Spleen (tissue), 13 donors: ENCODE measurements at regions of chr3 and their contacts with region 1.

Region 1: GRCh38 chr3:136075218-136075808 is 109.8 kb downstream of the PPP2R3A start:
- DNase-seq: no peak
- H3K4me3 ChIP-seq: no peak overlapping the region
- H3K27ac ChIP-seq: peak overlapping the region in 1 of 8 donors; percentile 11
- H3K4me1 ChIP-seq: peaks cover 0 to 17% (median 1%) of the 10 kb centered on the region in 6 donors
- H3K27me3 ChIP-seq: no peaks in the 10 kb centered on the region
- CTCF ChIP-seq: peak; percentile 74 to 96 (median 91)
- POLR2A ChIP-seq: no peak

Region 2: GRCh38 chr3:135944831-135945592 is 130.3 kb before region 1 on chr3:
- intact Hi-C with region 1: no loop called
- DNase-seq: no peak
- H3K4me3 ChIP-seq: no peak overlapping the region
- H3K27ac ChIP-seq: no peak overlapping the region
- H3K4me1 ChIP-seq: no peaks in the 10 kb centered on the region
- H3K27me3 ChIP-seq: peaks cover 0 to 13% (median 0%) of the 10 kb centered on the region in 7 donors
- CTCF ChIP-seq: no peak
- POLR2A ChIP-seq: no peak

Region 3: GRCh38 chr3:136250226-136250902 is 175.1 kb after region 1 on chr3 and contains the start of gene PCCB:
- intact Hi-C with region 1: loop called (anchors 5 kb)
- DNase-seq: peak; percentile 99
- H3K4me3 ChIP-seq: peak within 1 kb of the TSS; percentile 60 to 95 (median 72)
- H3K27ac ChIP-seq: peak within 1 kb of the TSS; percentile 87 to 95 (median 90)
- H3K4me1 ChIP-seq: peaks cover 9 to 23% (median 20%) of the 10 kb centered on the region in 6 donors
- H3K27me3 ChIP-seq: no peaks in the 10 kb centered on the region
- CTCF ChIP-seq: peak; percentile 70 to 96 (median 89)
- POLR2A ChIP-seq: no peak
- total RNA-seq, gene PCCB: 17.3 to 24.7 (median 21.0) TPM

Region 4: DNA sequence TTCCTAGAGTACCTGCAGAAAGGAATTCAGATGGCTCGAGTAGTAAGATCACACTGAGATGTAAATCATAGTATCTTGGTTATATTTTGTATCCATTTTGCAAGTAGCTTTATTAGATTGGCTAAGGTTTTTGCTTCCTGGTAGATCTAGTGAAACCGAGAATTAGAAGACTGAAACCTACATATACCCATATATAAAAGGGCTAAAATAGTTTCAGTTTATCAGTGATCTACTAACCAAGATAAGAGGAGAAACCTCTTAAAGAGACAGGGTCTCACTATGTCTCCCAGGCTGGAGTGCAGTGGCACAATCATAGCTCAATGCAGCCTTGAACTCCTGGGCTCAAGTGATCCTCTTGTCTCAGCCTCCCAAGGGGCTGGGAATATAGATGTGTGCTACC is 310.1 kb after region 1 on chr3:
- intact Hi-C with region 1: loop called (anchors 10 kb)
- DNase-seq: no peak
- H3K4me3 ChIP-seq: no peak overlapping the region
- H3K27ac ChIP-seq: no peak overlapping the region
- H3K4me1 ChIP-seq: no peaks in the 10 kb centered on the region
- H3K27me3 ChIP-seq: no peaks in the 10 kb centered on the region
- CTCF ChIP-seq: no peak
- POLR2A ChIP-seq: no peak

Region 5: GRCh38 chr3:137013955-137014688 is 938.8 kb after region 1 on chr3:
- intact Hi-C with region 1: loop called (anchors 5 kb)
- DNase-seq: peak; percentile 94
- H3K4me3 ChIP-seq: peak overlapping the region; percentile 21 to 66 (median 39)
- H3K27ac ChIP-seq: peak overlapping the region in 7 of 8 donors; percentile 15 to 69 (median 51)
- H3K4me1 ChIP-seq: peaks cover 2 to 14% (median 11%) of the 10 kb centered on the region in 6 donors
- H3K27me3 ChIP-seq: no peaks in the 10 kb centered on the region
- CTCF ChIP-seq: peak; percentile 82 to 95 (median 90)
- POLR2A ChIP-seq: no peak